ENCODE measurements at regions of chr10 and their contacts with region 1.

Region 1: GRCh38 chr10:6394084-6394483 is 186.0 kb downstream of the PRKCQ start:
- DNase-seq: no peak
- ATAC-seq: peak; percentile 47; the same call in 1 of the 3 replicates
- H3K4me3 ChIP-seq: no peak overlapping the region
- H3K27ac ChIP-seq: no peak overlapping the region
- H3K4me1 ChIP-seq: peaks cover 0 to 5% of the 10 kb centered on the region in 2 experiments; a peak in 2 of 5 replicates
- H3K27me3 ChIP-seq: peaks cover 8 to 9% of the 10 kb centered on the region in 2 experiments
- CTCF ChIP-seq: no peak; a peak in 1 of 6 replicates
- EP300 ChIP-seq: no peak
- POLR2A ChIP-seq: no peak
- RAD21 ChIP-seq: no peak

Region 2: DNA sequence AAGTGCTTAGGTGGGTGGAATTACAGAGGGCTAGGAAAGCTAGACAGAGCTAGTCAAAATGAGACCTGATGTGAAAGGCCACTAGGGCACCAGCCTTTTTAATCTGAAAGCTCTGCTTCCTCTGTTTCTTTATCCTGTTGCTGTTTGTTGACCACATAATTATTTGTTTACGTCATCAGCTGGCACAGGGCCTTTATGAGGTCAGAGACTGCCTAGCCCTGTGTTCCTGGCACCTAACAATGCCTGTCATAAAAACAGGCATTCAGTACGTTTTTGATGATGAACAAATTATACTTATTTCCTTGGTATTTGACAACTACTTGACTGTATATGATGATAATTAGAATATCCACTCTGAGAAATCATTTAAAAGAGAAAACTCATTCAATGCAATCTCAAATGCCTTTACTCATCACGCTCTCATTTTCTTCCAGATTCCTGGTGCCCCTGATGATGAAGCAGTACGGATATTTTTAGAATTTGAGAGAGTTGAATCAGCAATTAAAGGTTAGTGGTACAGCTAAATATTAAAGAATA is 279.2 kb before region 1 on chr10:
- CTCF ChIA-PET with region 1: no interaction called
- POLR2A ChIA-PET with region 1: no interaction called
- in situ Hi-C with region 1: loop called (anchors 5 kb)
- intact Hi-C with region 1: no loop called
- DNase-seq: no peak
- ATAC-seq: no peak
- H3K4me3 ChIP-seq: no peak overlapping the region
- H3K27ac ChIP-seq: no peak overlapping the region
- H3K4me1 ChIP-seq: no peaks in the 10 kb centered on the region
- H3K27me3 ChIP-seq: no peaks in the 10 kb centered on the region
- CTCF ChIP-seq: no peak
- EP300 ChIP-seq: no peak
- POLR2A ChIP-seq: no peak
- RAD21 ChIP-seq: no peak

Region 3: DNA sequence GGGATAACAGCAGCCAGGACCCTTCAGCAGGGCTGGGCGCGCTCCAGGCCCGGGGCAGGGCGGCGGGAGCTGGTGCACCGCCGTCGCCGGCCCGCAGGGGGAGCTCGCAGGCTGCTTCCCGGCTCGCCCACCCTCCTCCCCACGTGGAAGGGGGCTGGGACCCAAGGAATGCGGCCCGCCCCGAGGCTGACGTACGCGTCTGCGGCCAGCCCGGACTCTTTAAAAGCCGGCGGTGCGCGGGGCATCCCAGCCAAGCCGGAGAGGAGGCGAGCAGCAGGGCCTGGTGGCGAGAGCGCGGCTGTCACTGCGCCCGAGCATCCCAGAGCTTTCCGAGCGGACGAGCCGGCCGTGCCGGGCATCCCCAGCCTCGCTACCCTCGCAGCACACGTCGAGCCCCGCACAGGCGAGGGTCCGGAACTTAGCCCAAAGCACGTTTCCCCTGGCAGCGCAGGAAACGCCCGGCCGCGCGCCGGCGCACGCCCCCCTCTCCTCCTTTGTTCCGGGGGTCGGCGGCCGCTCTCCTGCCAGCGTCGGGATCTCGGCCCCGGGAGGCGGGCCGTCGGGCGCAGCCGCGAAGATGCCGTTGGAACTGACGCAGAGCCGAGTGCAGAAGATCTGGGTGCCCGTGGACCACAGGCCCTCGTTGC is 191.3 kb before region 1 on chr10 and contains the start of gene PFKFB3:
- CTCF ChIA-PET with region 1: no interaction called
- POLR2A ChIA-PET with region 1: interaction called, 3 read pairs
- in situ Hi-C with region 1: loop called (anchors 5 kb)
- intact Hi-C with region 1: no loop called
- DNase-seq: peak; percentile 91 to 96 (median 95)
- ATAC-seq: peak; percentile 94
- H3K4me3 ChIP-seq: peak within 1 kb of the TSS; percentile 62
- H3K27ac ChIP-seq: peak within 1 kb of the TSS; percentile 50; the same call in 2 of the 3 replicates
- H3K4me1 ChIP-seq: peaks cover 8 to 40% of the 10 kb centered on the region in 2 experiments
- H3K27me3 ChIP-seq: no peaks in the 10 kb centered on the region
- CTCF ChIP-seq: peak; percentile 87 to 89 (median 87)
- EP300 ChIP-seq: no peak
- POLR2A ChIP-seq: peak; percentile 45; the same call in 1 of the 2 replicates
- RAD21 ChIP-seq: peak; percentile 76 to 85
- polyA plus RNA-seq, gene PFKFB3: 0.46 to 0.73 TPM

Measured in K562 (cell line).